ENCODE measurements at regions of chr2 and their contacts with region 1.

Region 1: GRCh38 chr2:73176881-73177644 is 25.3 kb upstream of the NOTO start:
- DNase-seq: peak; percentile 97
- H3K4me3 ChIP-seq: peak overlapping the region; percentile 57 to 61
- H3K27ac ChIP-seq: no peak overlapping the region
- H3K4me1 ChIP-seq: peaks cover 0 to 30% of the 10 kb centered on the region in 2 experiments; a peak in 1 of 4 replicates
- H3K27me3 ChIP-seq: peaks cover 27% of the 10 kb centered on the region
- CTCF ChIP-seq: peak; percentile 90
- EP300 ChIP-seq: no peak
- RAD21 ChIP-seq: peak; percentile 85

Region 2: GRCh38 chr2:72901426-72901825 is 275.6 kb before region 1 on chr2:
- CTCF ChIA-PET with region 1: interaction called, 173 read pairs
- POLR2A ChIA-PET with region 1: no interaction called
- DNase-seq: peak; percentile 38
- H3K4me3 ChIP-seq: no peak overlapping the region
- H3K27ac ChIP-seq: no peak overlapping the region
- H3K4me1 ChIP-seq: peaks cover 0 to 11% of the 10 kb centered on the region in 2 experiments; a peak in 1 of 4 replicates
- H3K27me3 ChIP-seq: peaks cover 43% of the 10 kb centered on the region
- CTCF ChIP-seq: no peak
- EP300 ChIP-seq: no peak
- RAD21 ChIP-seq: no peak

Region 3: DNA sequence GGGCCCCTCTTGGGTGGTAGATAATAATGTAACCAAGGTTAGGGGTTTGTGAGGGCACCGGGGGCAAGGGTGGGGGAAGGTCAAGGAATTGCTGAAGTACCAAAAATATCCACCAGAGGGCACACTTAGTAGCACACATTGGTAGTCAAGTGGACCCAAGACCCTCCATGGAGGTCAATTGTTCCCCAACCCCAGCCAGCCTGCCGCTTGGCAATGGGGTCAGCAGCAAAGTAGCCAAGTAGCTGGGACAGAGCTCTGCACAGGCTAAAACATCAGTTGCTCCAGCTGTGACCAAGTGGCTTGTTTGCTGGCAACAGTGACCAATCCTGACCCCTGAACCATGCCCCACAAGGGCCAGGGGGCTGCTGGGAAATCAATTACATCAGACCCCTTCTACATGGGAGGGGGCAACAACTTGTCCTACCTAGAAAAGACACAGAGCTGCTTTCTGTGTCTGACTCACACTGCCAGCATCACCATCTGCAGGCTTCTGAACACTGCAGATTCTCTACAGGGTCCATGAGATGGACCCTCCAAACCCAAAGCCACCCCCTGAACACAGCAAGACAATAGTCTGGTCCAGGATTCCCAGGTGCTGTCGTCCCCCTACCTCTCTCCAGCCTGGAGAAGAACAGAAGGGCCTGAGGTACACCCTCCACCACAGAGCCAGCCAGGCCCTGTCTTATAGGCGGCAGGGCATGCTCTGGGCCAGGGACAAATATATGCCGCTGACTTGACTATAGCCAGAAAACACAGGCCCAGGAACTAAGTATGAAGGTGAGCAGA is 183.7 kb before region 1 on chr2:
- CTCF ChIA-PET with region 1: interaction called, 45 read pairs
- POLR2A ChIA-PET with region 1: no interaction called
- DNase-seq: peak; percentile 85
- H3K4me3 ChIP-seq: no peak overlapping the region; a peak in 1 of 4 replicates
- H3K27ac ChIP-seq: no peak overlapping the region
- H3K4me1 ChIP-seq: peaks cover 0 to 14% of the 10 kb centered on the region in 2 experiments; a peak in 1 of 4 replicates
- H3K27me3 ChIP-seq: no peaks in the 10 kb centered on the region
- CTCF ChIP-seq: peak; percentile 82
- EP300 ChIP-seq: no peak
- RAD21 ChIP-seq: peak; percentile 58

Region 4: DNA sequence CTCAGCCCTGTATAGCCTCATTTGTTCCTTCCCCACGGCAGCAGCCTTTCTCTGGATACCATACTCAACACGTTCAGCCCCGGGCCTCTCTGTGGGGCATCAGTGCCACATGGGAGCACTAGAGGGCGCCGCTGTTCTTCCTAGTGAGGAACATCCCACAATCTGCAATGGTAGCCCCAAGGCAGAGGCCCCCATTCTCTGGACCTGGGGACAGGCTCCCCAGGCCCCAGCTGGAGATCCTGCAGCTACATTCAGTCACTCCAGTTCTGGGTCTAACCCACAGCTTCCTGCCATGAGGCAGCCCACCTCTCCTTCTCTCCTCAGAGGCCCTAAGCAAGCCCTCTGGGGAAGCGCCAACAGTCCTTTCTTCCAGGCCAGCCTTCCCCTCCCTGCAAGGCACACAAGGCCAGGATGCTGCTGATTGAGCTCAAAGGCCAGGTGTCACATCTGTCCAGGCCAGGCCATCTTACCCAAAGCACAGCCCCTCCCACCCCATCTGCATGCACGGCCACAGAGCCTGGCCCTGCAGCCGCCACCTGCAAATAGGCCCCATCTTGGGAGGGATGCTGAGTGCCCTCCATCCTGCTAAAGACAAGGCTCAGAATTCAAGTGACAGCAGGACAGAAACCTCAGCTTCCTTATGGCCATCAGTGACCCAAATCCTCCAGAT is 91.2 kb before region 1 on chr2:
- CTCF ChIA-PET with region 1: interaction called, 77 read pairs
- POLR2A ChIA-PET with region 1: no interaction called
- DNase-seq: peak; percentile 88
- H3K4me3 ChIP-seq: peak overlapping the region in 1 of 2 experiments; percentile 46; a peak in 1 of 4 replicates
- H3K27ac ChIP-seq: no peak overlapping the region
- H3K4me1 ChIP-seq: peaks cover 2 to 22% of the 10 kb centered on the region in 2 experiments; a peak in 2 of 4 replicates
- H3K27me3 ChIP-seq: no peaks in the 10 kb centered on the region
- CTCF ChIP-seq: peak; percentile 97
- EP300 ChIP-seq: no peak
- RAD21 ChIP-seq: peak; percentile 96

Region 5: GRCh38 chr2:73156539-73157124 is 20.4 kb before region 1 on chr2:
- CTCF ChIA-PET with region 1: interaction called, 98 read pairs
- POLR2A ChIA-PET with region 1: no interaction called
- DNase-seq: peak; percentile 83
- H3K4me3 ChIP-seq: peak overlapping the region; percentile 6 to 49; a peak in 1 of 4 replicates
- H3K27ac ChIP-seq: no peak overlapping the region
- H3K4me1 ChIP-seq: peaks cover 0 to 5% of the 10 kb centered on the region in 2 experiments; a peak in 1 of 4 replicates
- H3K27me3 ChIP-seq: no peaks in the 10 kb centered on the region
- CTCF ChIP-seq: peak; percentile 87
- EP300 ChIP-seq: no peak
- RAD21 ChIP-seq: peak; percentile 92

Region 6: DNA sequence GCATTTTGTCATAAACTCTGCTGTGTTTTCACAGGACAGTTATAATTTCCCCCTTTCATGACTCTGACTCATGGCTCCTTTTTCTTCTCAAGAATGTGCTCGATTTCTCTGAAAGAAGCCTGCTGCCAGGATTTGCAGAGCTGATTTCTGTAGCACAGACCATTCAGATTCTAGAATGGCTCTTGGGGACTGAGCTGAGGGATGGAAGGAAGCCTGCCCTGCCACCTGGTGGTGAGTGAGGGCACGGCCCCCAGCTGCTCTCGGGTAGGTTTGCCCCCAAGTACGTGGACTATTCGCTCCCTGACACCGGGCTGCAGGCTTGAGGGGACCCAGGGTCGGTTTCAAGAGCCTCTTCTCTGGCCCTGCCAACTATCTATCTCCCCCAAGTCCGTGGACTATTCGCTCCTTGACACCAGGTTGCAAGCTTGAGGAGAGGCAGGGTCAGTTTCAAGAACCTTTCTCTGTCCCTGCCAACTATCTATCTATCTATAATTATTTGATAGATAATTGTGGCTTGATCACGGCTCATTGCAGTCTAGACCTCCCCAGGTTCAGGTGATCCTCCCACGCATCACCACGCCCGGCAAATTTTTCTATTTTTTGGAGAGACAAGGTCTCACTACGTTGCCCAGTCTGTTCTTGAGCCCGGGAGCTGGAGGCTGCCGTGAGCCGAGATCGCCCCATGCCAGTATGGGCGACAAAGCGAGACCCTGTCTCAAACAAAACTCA is 35.5 kb after region 1 on chr2:
- CTCF ChIA-PET with region 1: interaction called, 74 read pairs
- POLR2A ChIA-PET with region 1: no interaction called
- DNase-seq: peak; percentile 89
- H3K4me3 ChIP-seq: no peak overlapping the region; a peak in 1 of 4 replicates
- H3K27ac ChIP-seq: peak overlapping the region in 1 of 2 experiments; percentile 47; a peak in 1 of 4 replicates
- H3K4me1 ChIP-seq: peaks cover 3 to 10% of the 10 kb centered on the region in 2 experiments; a peak in 2 of 4 replicates
- H3K27me3 ChIP-seq: no peaks in the 10 kb centered on the region; the same call in 1 of the 2 replicates
- CTCF ChIP-seq: peak; percentile 91
- EP300 ChIP-seq: no peak
- RAD21 ChIP-seq: peak; percentile 69

Region 7: DNA sequence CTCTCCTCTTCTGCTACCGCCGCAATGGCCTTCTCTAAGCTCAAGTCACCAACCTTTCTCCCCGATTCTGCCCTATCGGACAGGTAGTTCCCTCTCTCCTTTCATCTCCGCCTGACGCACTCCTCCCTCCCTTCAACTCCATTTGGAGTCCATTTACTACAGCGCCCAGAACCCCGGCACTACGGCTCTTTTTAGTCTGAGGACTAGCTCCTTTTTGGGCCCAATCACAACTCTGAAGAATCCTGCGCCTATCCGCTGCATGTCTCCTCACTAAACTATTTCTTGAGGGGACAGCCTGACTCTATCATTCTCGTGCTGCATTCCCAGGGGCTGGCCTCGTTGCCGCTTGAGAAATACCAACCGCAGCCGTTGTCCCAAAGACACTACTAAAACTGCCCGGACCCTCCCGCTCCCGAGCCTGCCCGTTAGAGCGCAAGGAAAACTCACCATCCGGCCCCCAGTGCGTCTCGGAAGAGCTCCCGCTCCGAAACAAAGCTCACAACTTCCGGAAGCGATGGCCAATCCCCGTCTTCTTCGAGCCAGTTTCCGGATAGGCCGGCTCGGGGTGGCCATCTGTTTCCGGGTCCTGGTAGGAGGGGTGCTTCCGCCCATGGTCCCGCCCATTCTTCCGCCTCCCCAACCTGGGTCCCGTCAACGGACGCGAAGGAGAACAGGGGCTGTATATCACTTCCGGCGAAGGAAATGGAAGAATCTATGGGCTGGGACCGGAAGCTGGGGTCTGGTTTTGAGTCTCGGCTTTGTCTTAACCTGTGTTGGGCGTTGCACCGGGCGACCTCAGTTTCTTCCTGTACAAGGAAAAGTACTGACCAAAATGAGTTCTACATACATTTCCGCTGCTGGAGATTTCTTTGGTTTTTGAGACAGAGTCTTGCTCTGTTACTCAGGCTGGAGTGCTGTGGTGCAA is 560.1 kb after region 1 on chr2 and contains the start of gene TPRKB:
- CTCF ChIA-PET with region 1: no interaction called
- POLR2A ChIA-PET with region 1: no interaction called
- DNase-seq: peak; percentile 95
- H3K4me3 ChIP-seq: peak within 1 kb of the TSS; percentile 94 to 95
- H3K27ac ChIP-seq: peak within 1 kb of the TSS; percentile 62 to 65
- H3K4me1 ChIP-seq: peaks cover 6 to 8% of the 10 kb centered on the region in 2 experiments; a peak in 3 of 4 replicates
- H3K27me3 ChIP-seq: no peaks in the 10 kb centered on the region
- CTCF ChIP-seq: no peak
- EP300 ChIP-seq: no peak; a peak in 2 of 4 replicates
- RAD21 ChIP-seq: no peak
- polyA plus RNA-seq, gene TPRKB: 32.1 and 44.5 TPM in 2 replicates